OCI-LY7 (cell line): ENCODE measurements at regions of chr3 and their contacts with region 1.

Region 1: GRCh38 chr3:55485211-55485791 is 1.8 kb downstream of the WNT5A start:
- DNase-seq: peak; percentile 90
- H3K4me3 ChIP-seq: peak overlapping the region; percentile 87
- H3K27ac ChIP-seq: peak overlapping the region; percentile 62
- H3K4me1 ChIP-seq: peaks cover 19% of the 10 kb centered on the region
- CTCF ChIP-seq: peak; percentile 65

Region 2: GRCh38 chr3:54853573-54854404 is 631.5 kb before region 1 on chr3:
- CTCF ChIA-PET with region 1: no interaction called
- POLR2A ChIA-PET with region 1: no interaction called
- intact Hi-C with region 1: loop called (anchors 10 kb)
- DNase-seq: peak; percentile 60
- H3K4me3 ChIP-seq: no peak overlapping the region
- H3K27ac ChIP-seq: no peak overlapping the region
- H3K4me1 ChIP-seq: no peaks in the 10 kb centered on the region
- CTCF ChIP-seq: peak; percentile 90

Region 3: GRCh38 chr3:55296030-55296429 is 189.3 kb before region 1 on chr3:
- CTCF ChIA-PET with region 1: no interaction called
- POLR2A ChIA-PET with region 1: no interaction called
- intact Hi-C with region 1: no loop called
- DNase-seq: no peak
- H3K4me3 ChIP-seq: no peak overlapping the region
- H3K27ac ChIP-seq: no peak overlapping the region
- H3K4me1 ChIP-seq: no peaks in the 10 kb centered on the region
- CTCF ChIP-seq: no peak

Region 4: DNA sequence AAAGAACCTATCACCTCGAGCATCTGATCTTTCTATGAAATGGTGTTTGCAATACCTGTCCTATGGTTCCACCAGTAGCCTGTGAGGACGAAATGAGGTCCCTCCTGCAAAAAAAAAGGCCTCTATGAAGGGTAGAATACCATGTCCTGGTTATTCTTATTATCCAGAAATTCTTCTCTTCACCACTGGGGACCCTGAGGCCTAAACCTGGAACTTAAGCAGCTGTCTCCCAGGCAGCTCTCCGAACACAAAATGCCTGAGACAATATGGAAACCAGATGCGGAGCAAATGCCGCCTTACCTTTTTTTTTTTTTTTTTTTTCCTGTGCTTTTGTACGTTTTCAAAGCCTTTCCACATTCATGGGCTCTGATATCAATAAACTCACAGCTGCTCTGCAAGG is 63.9 kb after region 1 on chr3:
- CTCF ChIA-PET with region 1: no interaction called
- POLR2A ChIA-PET with region 1: no interaction called
- intact Hi-C with region 1: loop called (anchors 10 kb)
- DNase-seq: no peak
- H3K4me3 ChIP-seq: no peak overlapping the region
- H3K27ac ChIP-seq: no peak overlapping the region
- H3K4me1 ChIP-seq: peaks cover 6% of the 10 kb centered on the region
- CTCF ChIP-seq: peak; percentile 33; the same call in 1 of the 2 replicates

Region 5: GRCh38 chr3:55721716-55722484 is 236.6 kb after region 1 on chr3:
- CTCF ChIA-PET with region 1: no interaction called
- POLR2A ChIA-PET with region 1: interaction called, 14 read pairs
- intact Hi-C with region 1: loop called (anchors 1 kb)
- DNase-seq: peak; percentile 83
- H3K4me3 ChIP-seq: peak overlapping the region; percentile 2
- H3K27ac ChIP-seq: peak overlapping the region; percentile 94
- H3K4me1 ChIP-seq: peaks cover 95% of the 10 kb centered on the region
- CTCF ChIP-seq: peak; percentile 78

Region 6: DNA sequence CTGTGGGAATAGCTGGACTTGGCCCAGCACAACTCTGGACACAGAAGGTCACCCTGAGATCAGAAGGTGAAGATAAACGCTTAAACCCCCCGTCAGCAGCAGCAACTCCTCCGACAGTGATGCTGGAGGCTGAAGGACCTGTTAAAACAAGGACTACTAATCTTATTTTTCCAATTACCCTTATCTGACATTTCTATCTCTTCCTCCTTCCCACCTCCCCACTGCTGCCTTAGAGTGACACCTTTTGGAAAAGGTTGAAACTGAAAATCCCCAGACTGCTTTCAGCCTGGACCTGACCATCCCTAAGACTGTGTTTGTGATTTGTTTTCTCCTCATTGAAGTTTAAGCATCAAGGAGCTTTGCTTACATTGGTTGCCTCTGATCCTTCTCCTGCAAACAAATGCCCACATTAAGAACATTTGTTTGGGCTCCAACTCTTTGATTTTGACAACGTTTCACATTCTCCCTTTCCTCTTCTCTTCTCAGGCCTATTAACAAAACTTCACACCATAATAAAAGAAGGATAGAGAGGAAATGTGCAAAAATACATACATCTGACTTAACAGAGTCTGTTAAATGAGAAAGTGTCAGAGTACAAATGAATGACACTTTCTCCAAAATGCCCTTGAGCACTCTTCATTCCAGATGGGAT is 412.4 kb after region 1 on chr3:
- CTCF ChIA-PET with region 1: no interaction called
- POLR2A ChIA-PET with region 1: no interaction called
- intact Hi-C with region 1: loop called (anchors 1 kb)
- DNase-seq: peak; percentile 45
- H3K4me3 ChIP-seq: no peak overlapping the region
- H3K27ac ChIP-seq: no peak overlapping the region
- H3K4me1 ChIP-seq: no peaks in the 10 kb centered on the region
- CTCF ChIP-seq: peak; percentile 79

Region 7: GRCh38 chr3:56251343-56251945 is 766.1 kb after region 1 on chr3:
- CTCF ChIA-PET with region 1: no interaction called
- POLR2A ChIA-PET with region 1: no interaction called
- intact Hi-C with region 1: loop called (anchors 5 kb)
- DNase-seq: peak; percentile 53
- H3K4me3 ChIP-seq: no peak overlapping the region
- H3K27ac ChIP-seq: no peak overlapping the region
- H3K4me1 ChIP-seq: no peaks in the 10 kb centered on the region
- CTCF ChIP-seq: peak; percentile 97